ENCODE measurements at regions of chr12 and their contacts with region 1.

Region 1: DNA sequence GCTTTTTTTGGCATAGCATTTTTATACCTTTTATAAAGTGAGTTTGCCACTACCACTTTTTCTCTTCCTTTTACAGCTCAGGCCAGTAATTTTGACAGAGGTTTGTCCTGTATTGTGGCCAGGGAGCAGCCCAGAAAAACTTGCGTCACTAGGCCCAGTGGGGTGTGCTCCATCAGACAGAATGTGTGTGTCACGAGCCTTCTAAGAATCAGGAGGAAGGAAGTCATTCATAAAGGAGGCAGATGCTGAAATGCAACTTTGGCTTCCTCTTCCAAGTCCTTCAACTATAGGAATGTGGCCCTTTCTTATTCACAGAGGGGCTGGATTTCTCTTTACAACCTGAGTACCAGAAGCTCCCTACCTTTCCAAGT is 10.1 kb upstream of the RAB35 start:
- H3K4me3 Mint-ChIP-seq: peak overlapping the region; percentile 44
- H3K27ac Mint-ChIP-seq: peak overlapping the region; percentile 89
- H3K4me1 Mint-ChIP-seq: peaks cover 49% of the 10 kb centered on the region
- H3K27me3 Mint-ChIP-seq: no peaks in the 10 kb centered on the region

Region 2: GRCh38 chr12:120086801-120087621 is 39.6 kb before region 1 on chr12:
- intact Hi-C with region 1: loop called (anchors 5 kb)
- H3K4me3 Mint-ChIP-seq: peak overlapping the region; percentile 63
- H3K27ac Mint-ChIP-seq: peak overlapping the region; percentile 62
- H3K4me1 Mint-ChIP-seq: peaks cover 25% of the 10 kb centered on the region
- H3K27me3 Mint-ChIP-seq: peaks cover 13% of the 10 kb centered on the region

Region 3: GRCh38 chr12:120110550-120111501 is 15.8 kb before region 1 on chr12:
- intact Hi-C with region 1: loop called (anchors 2 kb)
- H3K4me3 Mint-ChIP-seq: peak overlapping the region; percentile 69
- H3K27ac Mint-ChIP-seq: peak overlapping the region; percentile 90
- H3K4me1 Mint-ChIP-seq: peaks cover 87% of the 10 kb centered on the region
- H3K27me3 Mint-ChIP-seq: no peaks in the 10 kb centered on the region

Region 4: DNA sequence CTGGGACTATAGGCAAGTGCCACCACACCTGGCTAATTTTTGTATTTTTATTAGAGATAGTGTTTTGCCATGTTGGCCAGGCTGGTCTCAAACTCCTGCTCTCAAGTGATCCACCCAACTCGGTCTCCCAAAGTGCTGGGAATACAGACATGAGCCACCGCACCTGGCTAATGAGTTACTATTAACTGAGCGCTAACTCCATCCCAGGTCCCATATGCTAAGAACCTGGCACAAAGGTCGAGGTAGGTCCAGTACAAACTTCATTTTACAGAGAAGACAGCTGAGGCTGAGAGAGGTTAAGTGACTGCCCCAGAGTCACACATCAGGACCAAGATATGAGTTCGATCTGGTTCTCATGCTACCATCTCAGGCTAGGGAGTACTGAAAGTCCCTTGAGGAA is 205.4 kb after region 1 on chr12:
- intact Hi-C with region 1: no loop called
- H3K4me3 Mint-ChIP-seq: no peak overlapping the region
- H3K27ac Mint-ChIP-seq: no peak overlapping the region
- H3K4me1 Mint-ChIP-seq: no peaks in the 10 kb centered on the region
- H3K27me3 Mint-ChIP-seq: peaks cover 8% of the 10 kb centered on the region